ENCODE measurements at regions of chr11 and their contacts with region 1.

Region 1: DNA sequence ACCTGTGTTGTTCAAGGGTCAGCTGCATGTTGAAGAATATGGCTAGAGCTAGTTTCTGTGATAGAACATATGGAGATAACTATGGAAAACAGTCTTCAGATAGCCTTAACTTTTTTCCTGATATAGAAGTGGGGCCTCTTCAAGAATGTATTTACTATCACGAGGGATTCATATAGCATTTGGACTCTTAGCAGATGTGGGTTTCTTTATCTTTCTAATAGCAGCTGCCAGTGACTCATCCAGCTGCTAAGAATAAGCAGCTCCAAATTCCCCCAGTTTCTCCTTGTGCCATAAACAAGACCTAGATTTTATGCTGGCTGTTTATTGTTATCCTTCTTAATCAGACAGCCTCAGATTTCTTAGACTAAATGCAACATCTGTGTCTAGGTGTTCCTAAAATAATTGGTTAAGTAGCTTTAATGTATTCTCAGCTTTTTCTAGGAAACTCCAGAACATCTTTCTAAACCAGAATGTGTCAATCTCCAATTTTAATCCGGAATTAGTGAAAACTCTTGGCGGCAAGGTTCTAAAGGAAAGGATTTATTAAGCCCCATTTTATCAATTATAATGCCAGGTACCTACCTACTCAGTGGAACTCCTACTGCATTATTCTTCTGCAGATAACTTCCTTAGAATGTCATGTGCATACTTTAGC is 119.8 kb downstream of the CSTPP1 start:
- DNase-seq: peak; percentile 66
- H3K4me3 ChIP-seq: no peak overlapping the region
- H3K27ac ChIP-seq: no peak overlapping the region
- H3K4me1 ChIP-seq: peaks cover 28% of the 10 kb centered on the region
- H3K27me3 ChIP-seq: no peaks in the 10 kb centered on the region
- CTCF ChIP-seq: no peak

Region 2: DNA sequence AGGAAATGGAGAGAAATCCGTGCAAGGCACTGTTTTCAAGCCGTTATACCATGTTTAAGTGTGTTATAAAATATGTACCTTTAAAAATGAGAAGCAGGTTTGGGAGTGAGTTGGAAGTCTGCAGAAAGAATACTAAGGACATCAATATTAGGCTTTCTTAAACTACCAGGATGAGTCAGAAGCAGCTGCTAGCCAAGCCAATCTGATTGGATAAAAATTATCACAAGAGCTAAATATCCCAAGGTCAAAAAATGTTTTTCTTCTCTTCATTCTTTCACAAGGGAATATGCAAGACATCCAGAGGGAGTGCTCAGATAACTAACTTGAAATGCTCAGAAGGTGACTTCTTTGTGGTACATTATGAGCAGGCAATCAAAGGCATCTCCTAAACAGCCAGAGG is 191.0 kb before region 1 on chr11:
- CTCF ChIA-PET with region 1: no interaction called
- POLR2A ChIA-PET with region 1: interaction called, 23 read pairs
- intact Hi-C with region 1: no loop called
- DNase-seq: no peak
- H3K4me3 ChIP-seq: no peak overlapping the region
- H3K27ac ChIP-seq: no peak overlapping the region
- H3K4me1 ChIP-seq: no peaks in the 10 kb centered on the region
- H3K27me3 ChIP-seq: no peaks in the 10 kb centered on the region
- CTCF ChIP-seq: no peak

Region 3: GRCh38 chr11:46889689-46890475 is 166.5 kb before region 1 on chr11:
- CTCF ChIA-PET with region 1: no interaction called
- POLR2A ChIA-PET with region 1: interaction called, 18 read pairs
- intact Hi-C with region 1: no loop called
- DNase-seq: peak; percentile 92
- H3K4me3 ChIP-seq: no peak overlapping the region
- H3K27ac ChIP-seq: no peak overlapping the region
- H3K4me1 ChIP-seq: no peaks in the 10 kb centered on the region
- H3K27me3 ChIP-seq: no peaks in the 10 kb centered on the region
- CTCF ChIP-seq: peak; percentile 100

Region 4: DNA sequence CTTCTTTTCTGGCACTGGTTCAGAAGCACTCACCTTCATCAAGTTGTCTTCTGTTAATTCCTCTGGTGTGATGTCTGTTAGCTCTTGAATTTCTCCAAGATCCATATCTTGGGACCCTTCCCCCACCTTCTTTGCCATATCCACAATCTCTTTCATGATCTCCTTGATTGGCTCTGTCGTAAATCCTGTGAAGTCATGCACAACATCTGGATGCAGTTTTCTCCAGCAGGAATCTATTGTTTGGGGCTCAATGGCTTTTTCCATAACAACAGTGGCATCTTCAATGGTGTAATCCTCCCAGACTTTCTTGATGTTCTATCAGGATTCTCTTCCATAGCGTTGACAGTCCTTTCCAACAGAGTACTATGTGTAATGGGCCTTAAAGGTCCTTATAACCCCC is 22.9 kb before region 1 on chr11:
- CTCF ChIA-PET with region 1: no interaction called
- POLR2A ChIA-PET with region 1: interaction called, 11 read pairs
- intact Hi-C with region 1: no loop called
- DNase-seq: peak; percentile 88
- H3K4me3 ChIP-seq: no peak overlapping the region
- H3K27ac ChIP-seq: peak overlapping the region; percentile 12
- H3K4me1 ChIP-seq: peaks cover 18% of the 10 kb centered on the region
- H3K27me3 ChIP-seq: no peaks in the 10 kb centered on the region
- CTCF ChIP-seq: no peak

Region 5: GRCh38 chr11:47616726-47617416 is 560.5 kb after region 1 on chr11:
- CTCF ChIA-PET with region 1: interaction called, 10 read pairs
- POLR2A ChIA-PET with region 1: no interaction called
- intact Hi-C with region 1: no loop called
- DNase-seq: peak; percentile 82
- H3K4me3 ChIP-seq: no peak overlapping the region
- H3K27ac ChIP-seq: no peak overlapping the region
- H3K4me1 ChIP-seq: no peaks in the 10 kb centered on the region
- H3K27me3 ChIP-seq: no peaks in the 10 kb centered on the region
- CTCF ChIP-seq: peak; percentile 93

Measured in A673 (cell line).